Left lung (tissue), 14 donors: ENCODE measurements at regions of chr7 and their contacts with region 1.

Region 1: GRCh38 chr7:30888747-30889146 is 22.9 kb upstream of the AQP1 start:
- DNase-seq: peak in 2 of 4 donors; percentile 41 to 55
- ATAC-seq: peak; percentile 79
- H3K4me3 ChIP-seq: no peak overlapping the region
- H3K27ac ChIP-seq: no peak overlapping the region
- H3K4me1 ChIP-seq: peaks cover 27 to 34% of the 10 kb centered on the region in 2 donors
- H3K27me3 ChIP-seq: no peaks in the 10 kb centered on the region
- CTCF ChIP-seq: no peak

Region 2: DNA sequence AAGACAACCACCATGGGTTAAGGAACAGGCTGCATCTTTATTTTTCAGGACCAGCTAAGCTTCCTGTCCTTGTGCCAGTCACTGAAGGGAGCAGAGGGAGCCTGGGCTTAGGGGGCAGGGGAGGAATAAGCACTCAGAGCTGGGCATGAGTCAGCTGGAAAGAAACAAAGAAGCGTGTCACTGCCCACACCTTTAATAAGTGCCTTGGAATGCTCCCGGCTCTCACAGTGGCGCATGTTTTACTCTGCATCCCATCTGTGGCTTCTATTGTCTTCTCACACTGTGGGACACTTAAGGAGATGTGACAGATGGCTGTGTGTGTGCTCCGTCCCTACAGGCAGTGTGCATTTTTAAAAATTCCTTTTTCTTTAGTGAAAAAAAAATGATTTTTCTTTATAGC is 682.3 kb before region 1 on chr7:
- intact Hi-C with region 1: no loop called
- DNase-seq: no peak
- ATAC-seq: peak; percentile 89
- H3K4me3 ChIP-seq: no peak overlapping the region
- H3K27ac ChIP-seq: no peak overlapping the region
- H3K4me1 ChIP-seq: no peaks in the 10 kb centered on the region
- H3K27me3 ChIP-seq: no peaks in the 10 kb centered on the region
- CTCF ChIP-seq: no peak

Region 3: GRCh38 chr7:30521532-30521931 is 367.2 kb before region 1 on chr7:
- intact Hi-C with region 1: no loop called
- DNase-seq: peak in 1 of 4 donors; percentile 43
- ATAC-seq: peak; percentile 86
- H3K4me3 ChIP-seq: no peak overlapping the region
- H3K27ac ChIP-seq: peak overlapping the region in 1 of 2 donors; percentile 4
- H3K4me1 ChIP-seq: peaks cover 3 to 11% of the 10 kb centered on the region in 2 donors
- H3K27me3 ChIP-seq: no peaks in the 10 kb centered on the region
- CTCF ChIP-seq: no peak

Region 4: DNA sequence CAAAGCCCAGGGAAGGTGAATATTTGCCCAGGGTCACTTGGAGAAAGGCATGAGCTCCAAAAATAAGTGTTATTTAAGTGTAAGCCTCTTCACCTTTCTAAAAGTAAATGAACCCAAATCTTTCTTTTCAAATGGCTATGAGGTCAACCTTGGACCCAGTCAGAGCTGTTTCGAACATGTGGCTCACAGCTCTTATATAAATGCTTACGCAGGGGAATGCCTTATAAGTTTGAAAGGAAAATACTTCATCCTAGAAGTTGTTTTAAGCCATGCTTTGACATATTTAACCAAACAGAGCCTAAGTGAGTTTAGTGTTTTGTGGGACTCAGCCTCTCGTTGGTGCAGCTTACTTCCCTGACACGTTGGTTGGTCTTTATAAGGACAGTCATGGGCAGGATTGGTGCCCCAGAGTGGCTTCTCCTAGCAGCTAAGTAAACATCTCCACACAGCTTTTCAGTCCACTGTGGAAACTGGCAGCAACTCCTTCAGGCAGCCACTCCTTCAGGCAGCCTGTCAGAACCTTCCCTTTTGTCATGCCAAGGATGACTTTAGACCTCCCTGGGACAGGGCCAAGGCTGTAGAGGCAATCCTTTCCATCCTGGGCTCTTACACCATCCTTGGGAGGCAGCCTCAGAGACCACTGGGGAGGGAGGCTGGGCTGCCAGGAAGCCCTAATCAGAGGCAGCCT is 73.9 kb before region 1 on chr7:
- intact Hi-C with region 1: loop called in 1 of 2 experiments (anchors 10 kb)
- DNase-seq: peak in 2 of 4 donors; percentile 32 to 72
- ATAC-seq: peak; percentile 85
- H3K4me3 ChIP-seq: no peak overlapping the region
- H3K27ac ChIP-seq: peak overlapping the region; percentile 66 to 73
- H3K4me1 ChIP-seq: peaks cover 15 to 20% of the 10 kb centered on the region in 2 donors
- H3K27me3 ChIP-seq: no peaks in the 10 kb centered on the region
- CTCF ChIP-seq: no peak